Dendritic cell treated with granulocyte-macrophage colony-stimulating factor and Interleukin-4, amounts not matched to agents 40 ng/mL and 50 ng/mL, for 4 days (primary cell): ENCODE measurements at regions of chr9 and their contacts with region 1.

Region 1: GRCh38 chr9:98087420-98088354 is 31.2 kb downstream of the NANS start:
- H3K4me3 Mint-ChIP-seq: peak overlapping the region; percentile 63
- H3K27ac Mint-ChIP-seq: peak overlapping the region; percentile 13
- H3K4me1 Mint-ChIP-seq: peaks cover 31% of the 10 kb centered on the region
- H3K27me3 Mint-ChIP-seq: no peaks in the 10 kb centered on the region

Region 2: DNA sequence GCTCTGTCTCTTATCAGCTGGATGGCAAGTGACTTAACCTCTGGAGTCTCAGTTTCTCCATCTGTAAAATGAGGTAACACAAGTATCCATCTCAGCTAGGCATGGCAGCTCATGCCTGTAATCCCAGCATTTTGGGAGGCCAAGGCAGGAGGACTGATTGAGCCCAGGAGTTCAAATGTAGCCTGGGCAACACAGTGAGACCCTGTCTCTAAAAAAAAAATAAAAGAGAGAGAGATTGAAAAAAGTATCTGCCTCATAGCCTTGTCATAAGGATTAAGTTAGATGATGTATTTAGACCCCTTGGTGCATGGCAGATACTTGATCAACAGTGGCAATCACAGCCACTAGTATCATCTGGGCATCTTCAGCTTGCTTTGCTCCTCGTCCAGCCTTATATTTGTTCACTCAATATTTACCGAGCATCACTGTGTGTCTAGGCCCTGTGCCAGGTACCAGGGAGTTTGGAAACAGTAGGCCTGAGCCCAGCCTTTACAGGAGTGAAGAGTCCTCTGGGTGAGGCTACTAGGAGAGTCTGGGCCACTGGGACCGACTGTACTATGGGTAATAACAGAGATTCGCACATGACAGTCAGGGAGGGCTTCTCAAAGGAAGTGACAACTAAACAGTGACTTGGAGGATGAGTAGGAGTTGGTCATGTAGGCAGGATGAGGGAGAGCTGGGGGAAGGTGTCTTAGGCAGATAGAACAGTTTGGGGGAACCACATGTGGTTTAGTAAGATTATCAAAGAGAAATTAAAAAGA is 70.6 kb after region 1 on chr9:
- intact Hi-C with region 1: loop called (anchors 10 kb)
- H3K4me3 Mint-ChIP-seq: no peak overlapping the region
- H3K27ac Mint-ChIP-seq: no peak overlapping the region
- H3K4me1 Mint-ChIP-seq: peaks cover 12% of the 10 kb centered on the region
- H3K27me3 Mint-ChIP-seq: no peaks in the 10 kb centered on the region